PC-9 (cell line): ENCODE measurements at regions of chr11 and their contacts with region 1.

Region 1: DNA sequence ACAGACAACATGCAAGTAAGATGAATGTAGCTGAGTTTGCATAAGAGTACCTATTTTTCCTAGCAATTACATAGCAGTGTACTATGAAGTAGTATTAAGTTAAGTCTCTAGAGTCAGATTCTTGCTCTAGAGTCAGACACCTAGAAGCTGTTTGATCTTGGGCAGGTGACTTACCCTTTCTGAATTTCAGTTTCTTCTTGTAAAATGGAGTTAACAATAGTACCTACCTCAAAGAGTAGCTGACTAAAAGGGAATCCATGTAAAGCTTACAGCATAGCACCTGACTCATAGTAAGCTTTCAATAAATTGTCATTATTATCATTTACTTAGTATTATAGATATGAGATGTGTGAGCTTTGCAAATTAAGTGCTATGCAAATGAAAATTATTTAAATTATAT is 47.8 kb upstream of the PTPRJ start:
- DNase-seq: no peak
- H3K4me3 ChIP-seq: no peak overlapping the region
- H3K27ac ChIP-seq: no peak overlapping the region
- H3K4me1 ChIP-seq: peaks cover 22% of the 10 kb centered on the region
- H3K27me3 ChIP-seq: no peaks in the 10 kb centered on the region
- CTCF ChIP-seq: no peak

Region 2: GRCh38 chr11:47955061-47955755 is 22.7 kb after region 1 on chr11:
- CTCF ChIA-PET with region 1: interaction called, 16 read pairs
- POLR2A ChIA-PET with region 1: no interaction called
- intact Hi-C with region 1: no loop called
- DNase-seq: no peak
- H3K4me3 ChIP-seq: no peak overlapping the region
- H3K27ac ChIP-seq: no peak overlapping the region
- H3K4me1 ChIP-seq: no peaks in the 10 kb centered on the region
- H3K27me3 ChIP-seq: no peaks in the 10 kb centered on the region
- CTCF ChIP-seq: no peak